CD8-positive, alpha-beta T cell (primary cell): ENCODE measurements at regions of chr6 and their contacts with region 1.

Region 1: DNA sequence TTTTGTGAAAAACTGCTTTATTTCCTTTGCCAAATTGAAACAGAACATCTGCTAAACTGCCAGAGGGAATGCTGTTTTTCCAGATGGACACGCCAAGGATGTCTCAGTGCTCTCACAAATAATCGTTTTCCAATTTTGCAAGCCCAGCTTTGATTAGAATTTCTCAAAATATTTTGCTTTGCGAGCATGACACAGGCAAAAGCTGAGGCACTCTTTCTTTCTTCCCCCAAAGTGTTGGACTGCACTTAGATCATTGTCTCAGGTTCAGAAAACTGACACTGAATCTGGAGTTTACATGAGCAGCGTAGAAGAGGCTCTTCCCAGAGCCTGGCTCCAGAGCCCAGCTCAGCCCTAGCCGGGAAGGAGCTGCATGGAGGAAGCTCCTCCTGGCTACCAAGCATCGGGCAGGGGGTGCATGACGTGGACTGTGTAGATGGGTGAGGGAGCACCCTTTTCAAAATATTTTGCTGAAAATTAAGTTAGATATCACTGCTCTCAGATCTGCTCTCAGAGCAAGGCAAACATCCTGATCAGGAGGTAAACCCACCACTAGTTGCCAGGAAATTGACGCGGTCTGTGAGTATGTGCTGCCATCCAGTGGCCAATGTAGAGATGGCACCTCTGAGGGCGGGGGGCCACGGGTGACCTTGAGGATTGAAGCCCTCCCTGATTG is 107.5 kb downstream of the SLC22A3 start:
- DNase-seq: peak; percentile 47 to 84 (median 71)
- ATAC-seq: peak; percentile 99
- H3K4me3 ChIP-seq: no peak overlapping the region
- H3K4me3 Mint-ChIP-seq: no peak overlapping the region
- H3K27ac ChIP-seq: no peak overlapping the region
- H3K27ac Mint-ChIP-seq: no peak overlapping the region
- H3K4me1 ChIP-seq: peaks cover 19% of the 10 kb centered on the region
- H3K4me1 Mint-ChIP-seq: peaks cover 36% of the 10 kb centered on the region
- H3K27me3 ChIP-seq: peaks cover 0 to 5% of the 10 kb centered on the region in 2 experiments
- H3K27me3 Mint-ChIP-seq: peaks cover 36% of the 10 kb centered on the region
- CTCF ChIP-seq: peak; percentile 94

Region 2: DNA sequence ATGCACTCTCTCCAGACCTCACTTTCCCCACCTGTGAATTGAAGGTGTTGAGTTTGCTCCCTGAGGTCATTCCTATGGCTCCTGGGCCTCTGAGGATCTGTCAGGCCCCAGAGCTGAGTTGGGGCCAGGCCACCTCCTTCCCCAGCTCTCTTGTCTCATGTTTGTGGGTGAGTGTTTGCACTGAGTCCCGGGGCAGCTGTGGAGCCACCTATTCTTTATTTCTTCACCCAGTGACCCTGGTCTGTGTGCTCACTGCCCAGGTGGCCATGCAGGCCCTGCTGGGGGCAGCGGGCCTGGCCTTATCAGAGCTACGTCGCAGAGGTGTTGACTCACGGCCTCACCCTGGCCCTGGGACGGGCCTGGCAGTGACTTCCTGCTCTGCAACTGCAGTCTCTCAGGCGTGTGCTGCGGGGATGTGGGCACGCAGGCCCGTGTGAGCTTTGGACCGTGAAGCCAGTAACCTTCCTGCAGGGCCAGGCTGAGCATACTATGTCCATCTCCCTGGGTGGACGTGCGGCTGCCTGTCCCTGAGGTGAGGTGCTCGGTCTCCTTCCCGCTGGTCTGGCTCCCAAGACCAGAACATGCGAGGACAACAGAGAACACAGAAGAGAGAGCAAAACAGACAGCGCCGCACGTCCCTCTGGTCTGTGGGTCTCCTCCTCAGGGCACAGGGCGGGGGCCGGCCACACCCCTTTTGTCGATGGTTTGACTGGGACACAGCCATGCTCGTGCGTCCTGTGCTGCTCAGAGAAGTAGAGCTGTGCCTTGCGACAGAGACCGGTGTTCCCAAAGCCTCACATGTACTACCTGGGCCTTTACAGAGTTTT is 1883.6 kb before region 1 on chr6:
- CTCF ChIA-PET with region 1: no interaction called
- POLR2A ChIA-PET with region 1: no interaction called
- intact Hi-C with region 1: no loop called
- DNase-seq: peak in 4 of 9 experiments; percentile 22 to 47 (median 44)
- ATAC-seq: peak; percentile 31
- H3K4me3 ChIP-seq: no peak overlapping the region
- H3K4me3 Mint-ChIP-seq: no peak overlapping the region
- H3K27ac ChIP-seq: peak overlapping the region in 1 of 2 experiments; percentile 57
- H3K27ac Mint-ChIP-seq: peak overlapping the region; percentile 67
- H3K4me1 ChIP-seq: peaks cover 40% of the 10 kb centered on the region
- H3K4me1 Mint-ChIP-seq: peaks cover 60% of the 10 kb centered on the region
- H3K27me3 ChIP-seq: no peaks in the 10 kb centered on the region
- H3K27me3 Mint-ChIP-seq: no peaks in the 10 kb centered on the region
- CTCF ChIP-seq: no peak

Region 3: DNA sequence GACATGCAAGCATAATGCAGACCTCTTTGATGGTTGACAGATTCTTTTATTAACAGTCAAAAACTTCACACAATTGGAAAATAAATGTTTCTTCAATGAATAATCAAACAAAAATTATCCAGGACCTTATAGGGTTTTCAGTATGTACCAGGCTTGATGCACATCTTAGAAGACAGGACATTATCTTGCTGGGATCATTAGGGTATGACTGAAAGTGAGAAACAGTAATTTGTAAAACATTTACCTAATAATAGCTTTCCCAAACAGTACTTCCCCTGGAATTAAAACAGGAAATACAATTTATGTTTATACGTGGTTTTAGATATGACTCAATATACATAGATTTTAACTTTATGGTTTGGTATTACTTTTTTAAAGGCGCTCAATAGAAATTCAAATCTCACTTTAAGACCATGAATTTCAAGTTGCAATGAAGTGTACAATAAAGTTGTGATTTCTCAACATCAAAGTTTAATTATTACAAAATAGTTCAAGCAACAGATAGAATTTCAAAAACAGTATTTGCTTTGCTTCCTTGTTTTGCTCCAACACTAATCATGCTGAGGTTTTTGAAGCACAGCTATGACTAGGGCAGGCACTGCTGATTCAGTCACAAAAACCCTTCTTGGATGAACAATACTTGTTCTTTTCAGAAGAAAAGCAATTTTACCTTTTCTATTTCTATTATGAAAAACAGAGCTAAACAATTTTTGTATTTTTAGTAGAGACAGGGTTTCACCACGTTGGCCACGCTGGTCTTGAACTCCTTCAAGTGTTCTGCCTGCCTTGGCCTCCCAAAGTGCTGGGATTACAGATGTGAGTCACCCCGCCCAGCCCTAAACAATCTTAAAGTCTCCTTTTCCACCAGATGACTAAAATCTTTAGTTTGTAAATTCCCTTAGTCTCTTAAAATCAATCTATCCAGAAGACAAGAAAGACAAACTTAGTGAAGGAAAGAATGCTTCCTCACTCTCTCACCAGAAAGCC is 776.3 kb before region 1 on chr6:
- CTCF ChIA-PET with region 1: no interaction called
- POLR2A ChIA-PET with region 1: no interaction called
- intact Hi-C with region 1: loop called in 1 of 2 experiments (anchors 1 kb)
- DNase-seq: no peak
- ATAC-seq: no peak
- H3K4me3 ChIP-seq: no peak overlapping the region
- H3K4me3 Mint-ChIP-seq: no peak overlapping the region
- H3K27ac ChIP-seq: no peak overlapping the region
- H3K27ac Mint-ChIP-seq: no peak overlapping the region
- H3K4me1 ChIP-seq: no peaks in the 10 kb centered on the region
- H3K4me1 Mint-ChIP-seq: peaks cover 8% of the 10 kb centered on the region
- H3K27me3 ChIP-seq: no peaks in the 10 kb centered on the region
- H3K27me3 Mint-ChIP-seq: no peaks in the 10 kb centered on the region
- CTCF ChIP-seq: no peak

Region 4: GRCh38 chr6:159761873-159762680 is 693.6 kb before region 1 on chr6 and contains the start of gene ACAT2:
- CTCF ChIA-PET with region 1: no interaction called
- POLR2A ChIA-PET with region 1: no interaction called
- intact Hi-C with region 1: loop called in 1 of 2 experiments (anchors 10 kb)
- DNase-seq: peak; percentile 81 to 96 (median 91)
- ATAC-seq: peak; percentile 86
- H3K4me3 ChIP-seq: peak within 1 kb of the TSS; percentile 85 to 99
- H3K4me3 Mint-ChIP-seq: peak within 1 kb of the TSS; percentile 96
- H3K27ac ChIP-seq: peak within 1 kb of the TSS; percentile 97 to 99
- H3K27ac Mint-ChIP-seq: peak within 1 kb of the TSS; percentile 97
- H3K4me1 ChIP-seq: peaks cover 16% of the 10 kb centered on the region
- H3K4me1 Mint-ChIP-seq: peaks cover 29% of the 10 kb centered on the region
- H3K27me3 ChIP-seq: no peaks in the 10 kb centered on the region
- H3K27me3 Mint-ChIP-seq: no peaks in the 10 kb centered on the region
- CTCF ChIP-seq: no peak
- total RNA-seq, gene ACAT2: 23.3 to 24.1 TPM

Region 5: GRCh38 chr6:160088069-160088783 is 367.5 kb before region 1 on chr6:
- CTCF ChIA-PET with region 1: interaction called, 3 read pairs
- POLR2A ChIA-PET with region 1: no interaction called
- intact Hi-C with region 1: loop called in 1 of 2 experiments (anchors 10 kb)
- DNase-seq: no peak
- ATAC-seq: no peak
- H3K4me3 ChIP-seq: no peak overlapping the region
- H3K4me3 Mint-ChIP-seq: no peak overlapping the region
- H3K27ac ChIP-seq: no peak overlapping the region
- H3K27ac Mint-ChIP-seq: no peak overlapping the region
- H3K4me1 ChIP-seq: no peaks in the 10 kb centered on the region
- H3K4me1 Mint-ChIP-seq: no peaks in the 10 kb centered on the region
- H3K27me3 ChIP-seq: no peaks in the 10 kb centered on the region
- H3K27me3 Mint-ChIP-seq: no peaks in the 10 kb centered on the region
- CTCF ChIP-seq: no peak

Region 6: GRCh38 chr6:160534050-160534696 is 78.5 kb after region 1 on chr6:
- CTCF ChIA-PET with region 1: interaction called, 12 read pairs
- POLR2A ChIA-PET with region 1: no interaction called
- intact Hi-C with region 1: loop called in 1 of 2 experiments (anchors 1 kb)
- DNase-seq: peak; percentile 21 to 76 (median 62)
- ATAC-seq: peak; percentile 86
- H3K4me3 ChIP-seq: no peak overlapping the region
- H3K4me3 Mint-ChIP-seq: no peak overlapping the region
- H3K27ac ChIP-seq: no peak overlapping the region
- H3K27ac Mint-ChIP-seq: no peak overlapping the region
- H3K4me1 ChIP-seq: no peaks in the 10 kb centered on the region
- H3K4me1 Mint-ChIP-seq: no peaks in the 10 kb centered on the region
- H3K27me3 ChIP-seq: no peaks in the 10 kb centered on the region
- H3K27me3 Mint-ChIP-seq: peaks cover 17% of the 10 kb centered on the region
- CTCF ChIP-seq: peak; percentile 95